Heart left ventricle (tissue), 16 donors: ENCODE measurements at regions of chr20 and their contacts with region 1.

Region 1: GRCh38 chr20:45011108-45011526 is 44.8 kb downstream of the STK4 start:
- DNase-seq: peak in 3 of 5 donors; percentile 33 to 50 (median 35)
- ATAC-seq: peak in 3 of 4 donors; percentile 71 to 83 (median 75)
- H3K4me3 ChIP-seq: no peak overlapping the region
- H3K27ac ChIP-seq: no peak overlapping the region
- H3K4me1 ChIP-seq: peaks cover 0 to 37% (median 14%) of the 10 kb centered on the region in 12 donors
- H3K27me3 ChIP-seq: no peaks in the 10 kb centered on the region
- CTCF ChIP-seq: peak; percentile 52 to 85 (median 70)
- POLR2A ChIP-seq: no peak

Region 2: DNA sequence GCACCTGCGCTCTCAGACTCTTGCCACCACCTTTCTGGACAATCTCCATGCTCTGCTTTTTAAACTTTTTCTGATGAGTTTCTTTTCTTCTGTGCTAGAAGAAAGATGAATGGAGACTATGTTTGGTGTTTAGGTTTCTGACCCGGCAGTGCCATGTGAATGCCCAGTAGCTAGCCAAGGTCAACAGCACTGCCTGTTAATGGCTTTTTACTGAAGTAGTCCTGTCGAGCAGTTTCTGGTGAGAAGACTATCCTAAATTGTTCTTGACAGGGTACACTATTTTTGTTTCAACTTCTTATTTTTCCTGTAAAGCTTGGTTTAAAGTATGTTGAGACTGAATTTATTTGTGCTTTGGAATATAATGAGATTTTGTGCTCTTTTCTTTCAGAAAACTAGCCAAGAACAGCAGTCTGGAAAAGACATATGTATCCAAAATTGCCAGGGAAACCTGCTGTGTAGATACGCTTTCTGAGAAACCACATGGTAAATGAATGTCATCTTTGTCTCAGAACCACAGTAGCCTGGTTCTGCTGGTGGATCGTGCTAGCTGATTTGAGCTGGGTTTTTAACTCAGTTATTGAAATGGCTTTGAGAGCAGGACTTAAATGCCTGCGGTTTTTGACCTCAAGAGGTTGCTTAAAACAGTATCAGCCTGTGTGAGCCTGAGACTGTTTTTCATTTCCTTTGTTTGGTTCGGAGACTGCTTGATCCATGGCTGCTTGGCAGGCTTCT is 41.7 kb after region 1 on chr20:
- intact Hi-C with region 1: loop called in 1 of 10 experiments (anchors 5 kb)
- DNase-seq: no peak
- ATAC-seq: no peak
- H3K4me3 ChIP-seq: no peak overlapping the region
- H3K27ac ChIP-seq: peak overlapping the region in 4 of 12 donors; percentile 0 to 57 (median 12)
- H3K4me1 ChIP-seq: peaks cover 0 to 50% (median 29%) of the 10 kb centered on the region in 12 donors
- H3K27me3 ChIP-seq: no peaks in the 10 kb centered on the region
- CTCF ChIP-seq: no peak
- POLR2A ChIP-seq: no peak

Region 3: GRCh38 chr20:45090481-45090880 is 79.4 kb after region 1 on chr20:
- intact Hi-C with region 1: loop called in 8 of 10 experiments (anchors 2 to 5 kb)
- DNase-seq: no peak
- ATAC-seq: no peak
- H3K4me3 ChIP-seq: no peak overlapping the region
- H3K27ac ChIP-seq: no peak overlapping the region
- H3K4me1 ChIP-seq: peaks cover 0 to 2% (median 0%) of the 10 kb centered on the region in 12 donors
- H3K27me3 ChIP-seq: no peaks in the 10 kb centered on the region
- CTCF ChIP-seq: no peak
- POLR2A ChIP-seq: no peak

Region 4: DNA sequence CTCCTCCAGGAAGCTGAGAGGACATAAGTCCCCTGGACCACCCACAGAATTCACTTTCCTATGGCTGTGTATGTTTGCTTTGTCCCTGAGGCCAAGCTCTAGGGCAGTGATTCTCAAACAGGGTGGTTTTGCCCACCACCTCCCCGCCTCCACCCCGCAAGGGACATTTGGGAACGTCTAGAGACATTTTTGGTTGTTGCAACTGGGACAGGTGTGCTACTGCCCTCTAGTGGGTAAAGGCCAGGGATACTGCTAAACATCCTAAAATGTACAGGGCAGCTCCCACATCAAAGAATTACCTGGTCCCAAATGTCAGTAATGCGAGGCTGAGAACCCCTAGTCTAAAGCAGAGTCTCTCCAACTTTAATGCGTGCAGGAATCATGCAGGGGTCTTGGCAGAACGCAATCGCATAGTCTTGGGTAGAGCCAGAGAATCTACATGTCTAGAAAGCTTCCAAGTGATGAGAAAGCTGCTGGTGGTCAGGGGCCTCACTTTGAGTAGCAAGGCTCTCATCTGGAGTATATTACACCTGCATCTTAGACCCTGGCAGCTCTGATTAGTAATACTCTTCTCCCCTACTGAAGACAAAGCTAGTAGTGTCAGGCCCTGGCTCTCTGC is 84.7 kb after region 1 on chr20:
- intact Hi-C with region 1: loop called in 9 of 10 experiments (anchors 2 to 5 kb)
- DNase-seq: peak in 4 of 5 donors; percentile 34 to 50 (median 39)
- ATAC-seq: peak; percentile 18 to 67 (median 50)
- H3K4me3 ChIP-seq: no peak overlapping the region
- H3K27ac ChIP-seq: no peak overlapping the region
- H3K4me1 ChIP-seq: peaks cover 0 to 17% (median 4%) of the 10 kb centered on the region in 12 donors
- H3K27me3 ChIP-seq: peaks cover 20 to 51% (median 33%) of the 10 kb centered on the region in 9 donors
- CTCF ChIP-seq: peak; percentile 54 to 79 (median 70)
- POLR2A ChIP-seq: no peak

Region 5: DNA sequence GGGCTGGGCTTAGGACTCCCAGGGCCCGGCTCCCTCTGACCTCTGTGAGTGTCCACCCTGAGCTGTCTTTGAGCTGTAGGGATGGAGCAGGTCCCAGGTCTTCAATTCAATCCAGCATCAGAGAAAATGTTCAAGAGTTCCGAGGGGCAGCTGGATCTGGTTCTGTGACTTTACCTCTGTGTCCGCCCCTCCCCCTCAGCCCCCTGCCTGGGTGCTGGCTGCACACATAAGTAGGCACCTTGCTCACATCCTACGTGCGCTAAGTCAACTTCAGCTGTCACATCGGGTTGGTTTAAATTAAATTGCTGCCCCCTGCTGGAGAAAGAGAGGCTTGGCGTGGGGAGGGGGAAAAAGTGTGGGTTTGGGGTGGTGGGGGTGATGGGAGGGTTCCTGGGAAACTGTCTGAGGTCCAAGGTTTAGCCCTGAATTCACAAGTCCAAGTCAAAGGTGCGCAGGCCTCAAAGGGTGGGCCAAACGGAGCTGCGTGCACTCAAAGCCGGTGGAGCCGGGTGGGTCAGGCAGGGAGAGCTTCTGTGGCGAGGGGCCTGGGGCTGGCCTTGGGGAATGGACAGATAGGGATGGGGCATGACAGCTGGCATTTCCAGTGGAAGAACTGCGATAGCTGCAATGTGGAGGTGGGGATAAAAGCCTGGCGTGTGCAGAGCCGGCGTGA is 100.8 kb after region 1 on chr20:
- intact Hi-C with region 1: loop called in 1 of 10 experiments (anchors 5 kb)
- DNase-seq: no peak
- ATAC-seq: no peak
- H3K4me3 ChIP-seq: no peak overlapping the region
- H3K27ac ChIP-seq: no peak overlapping the region
- H3K4me1 ChIP-seq: no peaks in the 10 kb centered on the region
- H3K27me3 ChIP-seq: peaks cover 0 to 29% (median 0%) of the 10 kb centered on the region in 9 donors
- CTCF ChIP-seq: peak; percentile 19 to 51 (median 38)
- POLR2A ChIP-seq: no peak

Region 6: GRCh38 chr20:45293041-45294002 is 282.2 kb after region 1 on chr20:
- intact Hi-C with region 1: loop called in 6 of 10 experiments (anchors 2 to 10 kb)
- DNase-seq: peak; percentile 61 to 91 (median 81)
- ATAC-seq: peak; percentile 35 to 90 (median 86)
- H3K4me3 ChIP-seq: peak overlapping the region; percentile 19 to 65 (median 52)
- H3K27ac ChIP-seq: no peak overlapping the region
- H3K4me1 ChIP-seq: peaks cover 0 to 19% (median 8%) of the 10 kb centered on the region in 12 donors
- H3K27me3 ChIP-seq: peaks cover 0 to 63% (median 11%) of the 10 kb centered on the region in 9 donors
- CTCF ChIP-seq: peak; percentile 83 to 95 (median 91)
- POLR2A ChIP-seq: no peak

Region 7: DNA sequence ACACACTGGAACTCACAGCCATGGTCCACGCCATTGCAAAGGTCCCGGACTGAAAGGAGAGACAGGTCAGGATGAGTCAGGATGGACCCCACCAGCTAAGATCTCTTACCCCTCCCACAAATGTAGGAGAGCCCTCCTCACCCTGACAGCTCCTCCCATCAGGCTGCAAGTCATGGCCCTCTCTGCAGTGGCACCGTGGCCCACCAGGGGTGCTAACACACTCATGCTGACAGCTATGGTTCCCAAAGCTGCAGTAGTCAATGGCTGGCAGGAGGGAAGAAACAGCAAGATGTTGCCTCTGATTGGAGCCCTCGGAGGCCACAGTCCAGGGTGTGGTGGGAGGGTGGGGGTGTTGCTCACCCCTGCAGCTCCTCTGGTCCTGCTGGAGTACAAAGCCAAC is 289.8 kb after region 1 on chr20:
- intact Hi-C with region 1: loop called in 2 of 10 experiments (anchors 10 kb)
- DNase-seq: no peak
- ATAC-seq: peak in 2 of 4 donors; percentile 24 to 32
- H3K4me3 ChIP-seq: no peak overlapping the region
- H3K27ac ChIP-seq: no peak overlapping the region
- H3K4me1 ChIP-seq: no peaks in the 10 kb centered on the region
- H3K27me3 ChIP-seq: peaks cover 5 to 74% (median 35%) of the 10 kb centered on the region in 9 donors
- CTCF ChIP-seq: peak in 5 of 12 donors; percentile 10 to 29 (median 15)
- POLR2A ChIP-seq: no peak

Region 8: DNA sequence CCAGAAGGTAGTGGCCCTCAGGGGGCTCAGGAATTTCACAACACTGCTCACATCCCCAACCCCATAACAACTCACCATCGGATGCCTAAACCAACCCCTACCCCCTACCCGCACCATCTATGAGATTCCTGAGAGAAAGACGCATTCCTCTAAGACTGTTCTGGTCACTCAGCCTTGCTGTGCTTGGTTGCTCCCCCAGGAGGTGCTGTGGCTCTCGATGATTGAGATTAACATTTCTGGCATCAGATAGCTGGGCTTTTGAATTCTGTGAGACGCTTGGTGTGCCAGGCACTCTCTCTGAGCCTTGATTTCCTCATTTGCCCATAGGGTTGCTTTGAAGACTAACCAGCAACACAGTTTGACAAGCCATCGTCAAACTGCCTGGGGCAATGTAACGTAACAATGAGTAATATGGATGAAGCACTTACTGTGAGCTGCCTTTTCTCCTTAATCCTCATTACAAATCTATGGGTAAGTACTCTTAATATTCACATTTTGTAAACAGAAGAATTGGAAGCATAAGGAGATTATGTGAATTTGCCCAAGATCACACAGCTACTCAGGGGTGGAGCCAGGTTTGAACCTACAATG is 527.2 kb after region 1 on chr20:
- intact Hi-C with region 1: no loop called
- DNase-seq: no peak
- ATAC-seq: no peak
- H3K4me3 ChIP-seq: no peak overlapping the region
- H3K27ac ChIP-seq: no peak overlapping the region
- H3K4me1 ChIP-seq: no peaks in the 10 kb centered on the region
- H3K27me3 ChIP-seq: peaks cover 0 to 40% (median 13%) of the 10 kb centered on the region in 9 donors
- CTCF ChIP-seq: no peak
- POLR2A ChIP-seq: no peak